ENCODE measurements at regions of chr12 and their contacts with region 1.

Region 1: DNA sequence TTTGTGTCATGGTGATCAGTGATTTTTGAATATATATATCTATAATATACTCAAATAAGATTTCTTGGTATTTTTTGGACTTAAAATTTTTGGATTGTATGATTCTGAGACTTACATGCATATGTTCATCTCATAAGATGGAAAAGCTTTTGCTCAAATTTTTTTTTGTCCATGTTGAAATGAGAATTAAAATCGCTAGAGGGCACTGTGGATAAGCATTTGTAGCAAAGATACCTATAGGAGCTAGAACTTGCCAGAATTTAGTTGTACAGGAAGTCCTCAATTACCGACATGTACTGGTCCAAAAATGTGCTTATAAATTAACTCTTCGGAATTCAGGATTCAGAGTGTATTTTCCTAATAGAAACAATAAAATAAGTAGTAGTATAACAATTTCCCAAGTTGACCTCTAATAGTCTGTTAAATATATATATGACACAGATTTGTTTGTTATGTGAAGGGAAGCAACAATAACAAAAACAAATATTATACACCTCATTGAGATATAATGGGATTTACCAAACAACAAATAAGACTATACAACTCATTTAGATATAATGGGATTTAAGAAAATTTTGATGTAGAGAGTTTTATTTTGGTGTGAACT is 179.6 kb downstream of the TMEM117 start:
- DNase-seq: peak; percentile 70
- H3K4me3 ChIP-seq: no peak overlapping the region
- H3K27ac ChIP-seq: no peak overlapping the region
- H3K4me1 ChIP-seq: 0 out of 2 replicates have a peak, but pooled peaks cover 3% of the 10 kb centered on the region
- H3K27me3 ChIP-seq: no peaks in the 10 kb centered on the region

Region 2: DNA sequence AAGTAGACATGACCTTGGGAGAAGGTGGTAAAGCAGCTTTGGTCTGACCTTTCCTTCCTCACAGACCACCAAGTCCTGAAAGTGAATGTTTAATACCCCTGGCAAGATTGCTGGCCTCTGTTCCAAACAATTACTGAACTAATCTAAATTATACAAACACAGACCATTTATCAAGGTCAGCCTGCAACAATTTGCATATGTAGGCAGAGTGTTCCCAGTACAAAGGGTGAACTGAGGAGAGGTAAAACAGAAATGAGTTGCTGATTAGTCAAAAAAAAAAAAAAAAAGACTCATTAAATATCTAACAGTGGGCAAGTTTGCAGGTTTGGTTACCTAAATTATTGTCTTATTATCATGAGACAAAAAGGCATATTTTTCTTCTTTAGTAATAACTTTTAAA is 326.9 kb after region 1 on chr12:
- in situ Hi-C with region 1: no loop called
- DNase-seq: no peak
- H3K4me3 ChIP-seq: no peak overlapping the region
- H3K27ac ChIP-seq: no peak overlapping the region
- H3K4me1 ChIP-seq: no peaks in the 10 kb centered on the region
- H3K27me3 ChIP-seq: no peaks in the 10 kb centered on the region

Region 3: DNA sequence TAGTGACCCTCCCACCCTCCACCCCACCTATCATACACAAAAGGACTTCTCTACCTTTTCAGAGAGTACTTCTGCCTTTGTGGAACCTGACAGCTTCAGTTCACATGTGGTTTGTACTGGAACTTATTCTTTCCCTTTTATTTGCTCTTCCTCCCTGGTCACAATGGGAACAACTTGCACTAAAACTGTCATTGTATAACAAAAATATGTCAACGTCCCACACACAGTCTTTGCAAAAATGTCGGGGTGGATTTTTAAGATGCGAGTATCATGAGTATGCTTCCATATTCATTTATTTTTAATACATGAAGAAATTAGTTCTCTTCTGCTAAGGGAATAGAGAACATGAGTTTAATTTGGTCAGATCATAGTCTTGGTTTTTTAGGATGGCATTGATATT is 906.3 kb after region 1 on chr12:
- in situ Hi-C with region 1: loop called (anchors 25 kb)
- DNase-seq: no peak
- H3K4me3 ChIP-seq: no peak overlapping the region
- H3K27ac ChIP-seq: no peak overlapping the region
- H3K4me1 ChIP-seq: no peaks in the 10 kb centered on the region
- H3K27me3 ChIP-seq: no peaks in the 10 kb centered on the region

Region 4: DNA sequence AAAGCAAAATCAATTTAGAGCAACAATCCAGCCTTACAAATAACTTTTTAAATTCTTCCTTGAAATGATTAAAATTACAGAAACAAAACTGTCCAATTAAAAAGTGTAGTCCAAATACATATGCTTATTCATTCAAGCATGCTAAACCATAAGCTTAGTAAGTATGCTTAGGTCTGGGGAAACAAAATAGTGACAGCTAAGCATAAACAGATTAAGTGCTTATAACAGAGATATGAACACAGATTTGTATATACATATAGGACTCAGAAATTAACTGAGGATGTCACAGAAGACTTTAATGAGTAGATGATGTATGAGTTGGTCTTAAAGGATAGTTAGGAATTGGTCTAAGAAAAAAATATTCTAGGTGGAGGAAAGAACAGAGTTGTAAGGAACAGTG is 1933.1 kb after region 1 on chr12:
- in situ Hi-C with region 1: no loop called
- DNase-seq: no peak
- H3K4me3 ChIP-seq: no peak overlapping the region
- H3K27ac ChIP-seq: no peak overlapping the region
- H3K4me1 ChIP-seq: peaks cover 8% of the 10 kb centered on the region
- H3K27me3 ChIP-seq: no peaks in the 10 kb centered on the region

Measured in GM23248 (cell line).